ENCODE measurements at regions of chr7 and their contacts with region 1.

Region 1: DNA sequence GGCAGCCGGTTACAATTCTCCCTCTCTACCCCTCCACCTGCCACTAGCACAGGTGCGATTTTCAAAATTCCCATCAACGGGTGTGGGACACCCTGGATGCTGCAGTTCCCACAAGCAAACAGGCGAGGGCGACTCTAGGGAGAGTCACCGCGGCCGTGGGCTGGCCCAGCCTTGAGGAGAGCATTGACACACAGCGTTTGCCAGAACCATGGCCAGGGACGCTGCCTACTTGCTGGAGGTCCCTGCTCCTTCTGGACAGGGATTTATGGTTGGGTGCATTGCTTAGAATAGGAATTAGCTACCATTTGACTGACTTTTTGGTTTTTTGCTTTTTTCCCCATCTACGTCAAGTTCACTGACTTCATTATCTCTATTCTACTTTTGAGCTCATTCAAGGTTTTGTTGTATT is 19.0 kb upstream of the CLDN4 start:
- DNase-seq: peak; percentile 91
- ATAC-seq: peak; percentile 96
- H3K4me3 Mint-ChIP-seq: no peak overlapping the region; the same call in 1 of the 2 replicates
- H3K27ac Mint-ChIP-seq: no peak overlapping the region
- H3K4me1 Mint-ChIP-seq: peaks cover 8% of the 10 kb centered on the region
- H3K27me3 Mint-ChIP-seq: no peaks in the 10 kb centered on the region
- CTCF ChIP-seq: peak; percentile 65

Region 2: DNA sequence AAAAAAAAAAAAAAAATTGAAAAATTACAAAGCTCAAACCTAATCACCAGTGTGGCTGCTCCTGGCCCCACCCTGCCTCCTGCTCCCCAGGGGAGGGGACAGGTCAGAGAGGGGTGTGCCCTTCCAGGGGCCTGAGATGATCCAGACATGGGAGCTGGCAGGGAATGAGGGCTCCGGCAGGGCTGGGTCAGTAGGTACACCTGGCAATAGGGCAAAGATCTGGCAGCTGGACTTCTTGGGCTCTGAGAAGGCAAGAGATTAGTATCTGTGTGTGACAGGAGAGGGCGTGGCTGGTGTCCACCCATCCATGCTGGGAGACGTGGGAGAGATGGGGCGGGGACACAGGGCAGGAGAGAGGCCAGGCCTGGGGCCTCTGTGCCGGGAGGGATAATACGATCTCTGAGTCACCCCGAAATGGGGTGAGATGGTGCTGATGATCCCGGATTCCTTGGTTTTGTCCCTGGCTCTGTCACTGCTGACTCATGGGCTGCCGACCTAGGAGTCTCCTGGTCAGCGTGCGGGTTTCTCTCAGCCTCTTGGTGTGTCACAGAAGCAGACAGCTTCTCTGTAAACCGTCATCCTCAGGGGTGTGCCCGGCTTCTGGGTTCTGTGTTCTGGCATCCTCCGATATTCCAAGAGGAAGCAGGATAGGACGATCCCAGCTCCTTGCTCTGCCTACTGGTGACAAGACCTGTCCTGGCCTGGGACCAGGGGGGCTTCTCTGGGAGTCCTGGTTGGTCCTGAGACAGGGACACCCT is 10.7 kb after region 1 on chr7:
- CTCF ChIA-PET with region 1: interaction called, 27 read pairs
- POLR2A ChIA-PET with region 1: interaction called, 3 read pairs
- DNase-seq: no peak
- ATAC-seq: no peak
- H3K4me3 Mint-ChIP-seq: no peak overlapping the region
- H3K27ac Mint-ChIP-seq: no peak overlapping the region
- H3K4me1 Mint-ChIP-seq: peaks cover 32% of the 10 kb centered on the region
- H3K27me3 Mint-ChIP-seq: peaks cover 8% of the 10 kb centered on the region
- CTCF ChIP-seq: no peak

Region 3: GRCh38 chr7:73828107-73828803 is 16.5 kb after region 1 on chr7:
- CTCF ChIA-PET with region 1: interaction called, 28 read pairs
- POLR2A ChIA-PET with region 1: interaction called, 8 read pairs
- DNase-seq: no peak
- ATAC-seq: no peak
- H3K4me3 Mint-ChIP-seq: peak overlapping the region; percentile 4
- H3K27ac Mint-ChIP-seq: peak overlapping the region; percentile 87
- H3K4me1 Mint-ChIP-seq: peaks cover 69% of the 10 kb centered on the region
- H3K27me3 Mint-ChIP-seq: peaks cover 7% of the 10 kb centered on the region
- CTCF ChIP-seq: no peak

Region 4: DNA sequence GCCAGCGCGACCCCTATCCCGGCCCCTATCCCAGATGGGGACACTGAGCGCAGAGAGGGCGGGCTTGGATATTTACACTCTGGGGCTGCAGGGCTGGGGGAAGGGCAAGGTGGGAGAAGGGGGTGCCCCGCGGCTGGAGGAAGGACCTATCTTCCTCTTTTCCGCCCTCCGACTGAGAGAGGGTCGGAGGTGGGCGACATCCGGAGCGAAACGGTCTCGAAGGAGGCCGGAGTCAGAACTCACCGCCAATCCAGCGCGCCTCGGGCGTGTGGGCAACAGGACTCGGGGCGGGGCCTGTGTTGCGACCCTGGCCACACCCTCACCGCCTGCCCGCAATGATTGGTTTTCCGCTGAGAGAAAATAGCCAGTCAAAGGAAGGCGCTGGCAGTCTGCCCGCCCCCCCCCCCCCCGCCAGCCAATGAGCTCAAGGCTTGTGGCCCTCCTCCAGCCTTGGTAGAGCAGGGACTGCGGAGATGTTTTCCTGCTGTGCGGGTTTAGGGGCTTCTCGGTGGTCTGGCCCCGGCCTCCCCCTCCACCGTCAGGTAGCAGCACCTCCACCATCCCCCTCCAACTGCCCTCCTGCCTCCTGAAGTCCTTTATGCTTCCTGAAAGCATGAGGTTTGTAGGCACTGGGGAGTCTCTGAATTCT is 30.6 kb after region 1 on chr7 and contains the start of gene METTL27:
- CTCF ChIA-PET with region 1: interaction called, 45 read pairs
- POLR2A ChIA-PET with region 1: interaction called, 4 read pairs
- DNase-seq: peak; percentile 96
- ATAC-seq: peak; percentile 93
- H3K4me3 Mint-ChIP-seq: peak within 1 kb of the TSS; percentile 80
- H3K27ac Mint-ChIP-seq: peak within 1 kb of the TSS; percentile 87
- H3K4me1 Mint-ChIP-seq: peaks cover 32% of the 10 kb centered on the region
- H3K27me3 Mint-ChIP-seq: no peaks in the 10 kb centered on the region; the same call in 1 of the 2 replicates
- CTCF ChIP-seq: no peak
- total RNA-seq, gene METTL27: 4.3 to 7.7 TPM (median 6.6 TPM) in 3 replicates

Region 5: DNA sequence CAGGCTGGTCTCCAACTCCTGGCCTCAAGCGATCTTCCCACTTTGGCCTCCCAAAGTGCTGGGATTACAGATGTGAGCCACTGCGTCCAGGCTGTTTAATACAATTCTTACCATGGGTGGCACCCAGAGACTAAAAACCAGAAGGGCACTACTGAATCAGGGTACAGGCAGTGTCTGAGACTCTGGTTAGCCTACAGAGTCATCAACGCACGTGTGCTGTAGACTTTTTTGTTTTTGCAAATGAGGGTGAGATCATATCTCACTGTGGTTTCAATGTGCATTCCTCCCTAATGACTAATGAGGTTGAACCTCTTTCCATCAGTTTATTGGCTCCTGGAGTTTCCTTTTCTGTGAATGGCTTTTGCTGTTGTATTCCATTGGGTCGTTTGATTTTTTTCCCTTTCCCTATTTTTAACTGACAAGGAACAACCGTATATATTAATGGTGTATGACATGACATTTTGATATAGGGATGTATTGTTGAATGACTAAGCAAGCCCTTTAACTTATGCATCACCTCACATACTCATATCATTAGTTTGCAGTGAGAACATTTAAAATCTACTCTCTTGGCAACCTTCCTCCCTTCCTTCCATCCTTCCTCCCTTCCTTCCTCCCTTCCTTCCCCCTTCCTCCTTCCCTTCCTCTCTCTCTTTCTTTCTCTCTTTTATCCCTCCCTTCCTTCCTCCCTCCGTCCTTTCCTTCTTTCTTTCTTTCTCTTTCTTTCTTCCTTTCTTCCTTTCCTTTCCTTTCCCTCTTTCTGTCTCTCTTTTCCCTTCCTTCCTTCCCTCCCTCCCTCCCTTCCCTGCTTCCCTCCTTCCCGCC is 39.9 kb after region 1 on chr7:
- CTCF ChIA-PET with region 1: interaction called, 48 read pairs
- POLR2A ChIA-PET with region 1: interaction called, 3 read pairs
- DNase-seq: no peak
- ATAC-seq: no peak
- H3K4me3 Mint-ChIP-seq: no peak overlapping the region
- H3K27ac Mint-ChIP-seq: no peak overlapping the region
- H3K4me1 Mint-ChIP-seq: peaks cover 17% of the 10 kb centered on the region
- H3K27me3 Mint-ChIP-seq: peaks cover 17% of the 10 kb centered on the region
- CTCF ChIP-seq: no peak